ENCODE measurements at regions of chr1 and their contacts with region 1.

Region 1: DNA sequence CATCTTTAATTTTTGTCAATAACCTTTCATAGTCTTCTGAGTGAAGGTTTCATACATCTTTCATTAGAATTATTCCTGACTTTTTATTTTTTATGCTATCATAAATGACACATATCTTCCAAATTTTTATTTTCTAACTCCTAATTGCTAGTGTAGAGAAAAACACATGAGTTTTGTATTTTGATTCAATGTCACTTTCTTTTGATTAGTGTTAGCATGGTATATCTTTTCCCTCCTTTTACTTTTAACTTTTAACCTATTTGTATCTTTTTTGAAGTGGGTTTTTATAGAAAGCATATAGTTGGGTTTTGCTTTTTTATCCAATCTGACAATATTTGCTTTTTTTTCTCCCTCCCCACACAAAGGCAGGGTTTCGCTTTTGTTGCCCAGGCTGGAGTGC is 43.2 kb downstream of the SDCCAG8 start:
- DNase-seq: no peak
- ATAC-seq: no peak
- H3K4me3 ChIP-seq: no peak overlapping the region
- H3K27ac ChIP-seq: no peak overlapping the region
- H3K4me1 ChIP-seq: no peaks in the 10 kb centered on the region
- H3K27me3 ChIP-seq: no peaks in the 10 kb centered on the region
- CTCF ChIP-seq: no peak

Region 2: DNA sequence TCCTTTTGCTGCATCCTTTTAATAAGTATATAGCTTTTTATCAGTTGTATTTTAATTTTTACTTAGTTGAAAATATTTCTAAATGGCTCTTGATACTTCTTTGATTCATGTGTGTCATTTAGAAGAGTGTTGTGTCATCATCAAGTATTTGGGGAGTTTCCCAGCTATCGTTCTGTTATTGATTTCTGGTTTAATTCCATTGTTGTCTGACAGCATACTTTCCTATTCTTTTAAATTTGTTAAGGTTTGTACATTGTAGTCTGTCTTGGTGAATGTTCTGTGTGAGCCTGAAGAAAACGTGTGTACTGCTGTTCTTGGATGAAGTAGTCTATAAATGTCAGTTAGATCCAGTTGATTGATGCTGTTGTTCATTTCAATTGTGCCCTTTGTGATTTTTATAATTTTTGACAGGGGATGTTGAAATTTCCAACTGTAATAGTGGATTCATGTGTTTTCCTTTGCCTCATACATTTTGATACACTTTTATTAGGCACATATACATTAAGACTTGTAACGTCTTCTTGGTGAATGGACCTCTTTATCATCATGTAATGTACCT is 18.4 kb before region 1 on chr1:
- intact Hi-C with region 1: loop called in 1 of 2 experiments (anchors 2 kb)
- DNase-seq: no peak
- ATAC-seq: no peak
- H3K4me3 ChIP-seq: no peak overlapping the region
- H3K27ac ChIP-seq: no peak overlapping the region
- H3K4me1 ChIP-seq: no peaks in the 10 kb centered on the region
- H3K27me3 ChIP-seq: no peaks in the 10 kb centered on the region
- CTCF ChIP-seq: no peak

Region 3: GRCh38 chr1:243482141-243483022 is 183.3 kb after region 1 on chr1:
- intact Hi-C with region 1: no loop called
- DNase-seq: no peak
- ATAC-seq: peak in 3 of 4 donors; percentile 17 to 63 (median 42)
- H3K4me3 ChIP-seq: peak overlapping the region; percentile 51
- H3K27ac ChIP-seq: no peak overlapping the region
- H3K4me1 ChIP-seq: peaks cover 5% of the 10 kb centered on the region
- H3K27me3 ChIP-seq: no peaks in the 10 kb centered on the region
- CTCF ChIP-seq: no peak

Measured in psoas muscle (tissue), 8 donors.